ENCODE measurements at regions of chr1 and their contacts with region 1.

Region 1: GRCh38 chr1:116909510-116910378 is at the start of gene PTGFRN:
- DNase-seq: peak in 1 of 2 donors; percentile 76
- H3K4me3 ChIP-seq: peak within 1 kb of the TSS; percentile 73 to 94
- H3K27ac ChIP-seq: peak within 1 kb of the TSS; percentile 79 to 85
- H3K4me1 ChIP-seq: peaks cover 0 to 6% of the 10 kb centered on the region in 2 donors
- H3K27me3 ChIP-seq: no peaks in the 10 kb centered on the region
- CTCF ChIP-seq: no peak
- total RNA-seq, gene PTGFRN: 11.2 TPM

Region 2: GRCh38 chr1:116570358-116571200 is 339.2 kb before region 1 on chr1 and contains the start of gene CD58:
- intact Hi-C with region 1: loop called (anchors 10 kb)
- DNase-seq: peak; percentile 55 to 95
- H3K4me3 ChIP-seq: peak within 1 kb of the TSS; percentile 91 to 92
- H3K27ac ChIP-seq: peak within 1 kb of the TSS; percentile 99 to 100
- H3K4me1 ChIP-seq: peaks cover 0 to 11% of the 10 kb centered on the region in 2 donors
- H3K27me3 ChIP-seq: no peaks in the 10 kb centered on the region
- CTCF ChIP-seq: peak; percentile 73 to 81 (median 78)
- total RNA-seq, gene CD58: 50.7 TPM

Region 3: DNA sequence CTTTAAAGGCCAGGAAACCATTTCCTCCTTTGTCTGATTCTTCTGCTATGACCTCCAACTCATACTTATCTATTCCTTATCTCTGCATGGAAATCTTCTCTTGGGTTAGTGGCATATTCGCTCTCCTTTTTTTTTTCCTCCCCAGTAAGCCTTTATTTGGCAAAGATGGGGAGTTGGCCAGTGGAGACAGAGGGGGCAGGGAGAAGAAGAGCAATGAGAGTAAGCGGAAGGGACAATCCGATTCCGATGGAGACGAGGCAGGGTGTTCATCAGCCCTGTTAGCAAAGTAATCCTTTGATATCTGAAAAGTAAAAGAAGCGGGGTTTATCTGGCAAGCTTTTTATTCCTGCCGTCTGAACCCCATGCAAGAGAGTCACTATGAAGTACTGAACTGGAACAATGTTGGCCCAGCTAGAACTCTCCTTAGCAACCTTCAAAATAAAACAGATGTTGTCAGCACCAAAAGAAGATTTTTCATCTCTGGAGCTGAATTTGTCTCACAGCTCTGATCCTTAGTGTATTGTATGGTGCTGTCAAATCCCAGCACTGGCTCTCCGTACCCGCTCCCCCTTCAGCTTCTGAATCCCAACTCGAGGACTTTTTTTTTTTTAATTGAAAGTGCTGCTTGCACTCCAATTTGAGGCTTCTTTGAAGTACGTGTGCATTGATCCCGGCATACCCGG is 40.9 kb after region 1 on chr1:
- intact Hi-C with region 1: loop called (anchors 1 kb)
- DNase-seq: no peak
- H3K4me3 ChIP-seq: peak overlapping the region in 1 of 2 donors; percentile 48
- H3K27ac ChIP-seq: peak overlapping the region in 1 of 2 donors; percentile 51
- H3K4me1 ChIP-seq: peaks cover 8 to 11% of the 10 kb centered on the region in 2 donors
- H3K27me3 ChIP-seq: no peaks in the 10 kb centered on the region
- CTCF ChIP-seq: no peak

Region 4: GRCh38 chr1:116987256-116987555 is 77.5 kb after region 1 on chr1:
- intact Hi-C with region 1: loop called (anchors 5 kb)
- DNase-seq: no peak
- H3K4me3 ChIP-seq: no peak overlapping the region
- H3K27ac ChIP-seq: no peak overlapping the region
- H3K4me1 ChIP-seq: peaks cover 0 to 10% of the 10 kb centered on the region in 2 donors
- H3K27me3 ChIP-seq: no peaks in the 10 kb centered on the region
- CTCF ChIP-seq: no peak

Region 5: GRCh38 chr1:117017648-117018047 is 107.9 kb after region 1 on chr1:
- intact Hi-C with region 1: no loop called
- DNase-seq: no peak
- H3K4me3 ChIP-seq: no peak overlapping the region
- H3K27ac ChIP-seq: no peak overlapping the region
- H3K4me1 ChIP-seq: no peaks in the 10 kb centered on the region
- H3K27me3 ChIP-seq: no peaks in the 10 kb centered on the region
- CTCF ChIP-seq: no peak